MCF 10A (cell line): ENCODE measurements at regions of chr15 and their contacts with region 1.

Region 1: GRCh38 chr15:67048281-67049279 is 16.8 kb upstream of the SMAD3 start:
- DNase-seq: peak; percentile 88
- H3K4me3 Mint-ChIP-seq: no peak overlapping the region
- H3K27ac Mint-ChIP-seq: peak overlapping the region; percentile 94
- H3K4me1 Mint-ChIP-seq: peaks cover 45% of the 10 kb centered on the region
- H3K27me3 Mint-ChIP-seq: no peaks in the 10 kb centered on the region
- CTCF ChIP-seq: no peak

Region 2: DNA sequence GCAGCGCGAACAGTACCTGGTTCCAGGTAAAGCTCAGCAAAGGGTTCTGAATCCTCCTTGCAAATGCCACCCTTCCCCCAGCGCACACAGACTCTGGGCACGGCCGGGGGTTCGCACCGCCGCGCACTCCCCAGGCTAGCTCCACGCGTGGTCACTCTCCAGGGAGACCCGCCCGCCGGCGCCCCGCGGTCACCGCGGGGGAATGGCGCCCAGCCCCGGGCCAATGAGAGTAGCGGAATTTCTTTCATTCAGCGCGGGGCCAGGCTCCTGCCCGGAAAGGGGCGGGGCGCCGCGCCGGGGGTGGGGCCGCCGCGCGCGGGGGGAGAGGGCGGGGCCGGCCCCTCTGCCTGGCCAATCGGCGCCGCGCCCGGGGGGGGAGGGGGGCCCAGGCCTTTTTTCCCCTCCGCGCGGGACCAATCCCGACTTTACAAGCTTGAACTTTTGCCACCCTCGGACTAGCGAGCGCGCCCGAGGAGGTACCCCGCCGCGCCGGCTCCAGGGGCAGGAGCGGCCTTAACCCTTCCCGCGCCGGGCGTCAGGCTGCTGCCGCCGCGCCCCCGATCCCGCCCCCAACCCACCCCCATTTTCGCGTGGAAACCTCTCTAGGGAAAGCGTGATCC is 347.7 kb before region 1 on chr15:
- CTCF ChIA-PET with region 1: no interaction called
- POLR2A ChIA-PET with region 1: no interaction called
- intact Hi-C with region 1: no loop called
- DNase-seq: peak; percentile 95
- H3K4me3 Mint-ChIP-seq: peak overlapping the region; percentile 79
- H3K27ac Mint-ChIP-seq: no peak overlapping the region
- H3K4me1 Mint-ChIP-seq: peaks cover 12% of the 10 kb centered on the region
- H3K27me3 Mint-ChIP-seq: peaks cover 18% of the 10 kb centered on the region
- CTCF ChIP-seq: no peak

Region 3: GRCh38 chr15:66946578-66947164 is 101.9 kb before region 1 on chr15:
- CTCF ChIA-PET with region 1: interaction called, 6 read pairs
- POLR2A ChIA-PET with region 1: no interaction called
- intact Hi-C with region 1: loop called (anchors 5 kb)
- DNase-seq: peak; percentile 83
- H3K4me3 Mint-ChIP-seq: no peak overlapping the region
- H3K27ac Mint-ChIP-seq: no peak overlapping the region
- H3K4me1 Mint-ChIP-seq: peaks cover 7% of the 10 kb centered on the region
- H3K27me3 Mint-ChIP-seq: no peaks in the 10 kb centered on the region
- CTCF ChIP-seq: peak; percentile 94

Region 4: GRCh38 chr15:67120839-67121643 is 72.5 kb after region 1 on chr15:
- CTCF ChIA-PET with region 1: no interaction called
- POLR2A ChIA-PET with region 1: interaction called, 19 read pairs
- intact Hi-C with region 1: no loop called
- DNase-seq: peak; percentile 77
- H3K4me3 Mint-ChIP-seq: peak overlapping the region; percentile 55
- H3K27ac Mint-ChIP-seq: peak overlapping the region; percentile 97
- H3K4me1 Mint-ChIP-seq: peaks cover 66% of the 10 kb centered on the region
- H3K27me3 Mint-ChIP-seq: no peaks in the 10 kb centered on the region
- CTCF ChIP-seq: no peak

Region 5: GRCh38 chr15:67240235-67241131 is 191.9 kb after region 1 on chr15:
- CTCF ChIA-PET with region 1: no interaction called
- POLR2A ChIA-PET with region 1: interaction called, 4 read pairs
- intact Hi-C with region 1: loop called (anchors 5 kb)
- DNase-seq: peak; percentile 57
- H3K4me3 Mint-ChIP-seq: no peak overlapping the region
- H3K27ac Mint-ChIP-seq: peak overlapping the region; percentile 51
- H3K4me1 Mint-ChIP-seq: peaks cover 31% of the 10 kb centered on the region
- H3K27me3 Mint-ChIP-seq: no peaks in the 10 kb centered on the region
- CTCF ChIP-seq: peak; percentile 38

Region 6: DNA sequence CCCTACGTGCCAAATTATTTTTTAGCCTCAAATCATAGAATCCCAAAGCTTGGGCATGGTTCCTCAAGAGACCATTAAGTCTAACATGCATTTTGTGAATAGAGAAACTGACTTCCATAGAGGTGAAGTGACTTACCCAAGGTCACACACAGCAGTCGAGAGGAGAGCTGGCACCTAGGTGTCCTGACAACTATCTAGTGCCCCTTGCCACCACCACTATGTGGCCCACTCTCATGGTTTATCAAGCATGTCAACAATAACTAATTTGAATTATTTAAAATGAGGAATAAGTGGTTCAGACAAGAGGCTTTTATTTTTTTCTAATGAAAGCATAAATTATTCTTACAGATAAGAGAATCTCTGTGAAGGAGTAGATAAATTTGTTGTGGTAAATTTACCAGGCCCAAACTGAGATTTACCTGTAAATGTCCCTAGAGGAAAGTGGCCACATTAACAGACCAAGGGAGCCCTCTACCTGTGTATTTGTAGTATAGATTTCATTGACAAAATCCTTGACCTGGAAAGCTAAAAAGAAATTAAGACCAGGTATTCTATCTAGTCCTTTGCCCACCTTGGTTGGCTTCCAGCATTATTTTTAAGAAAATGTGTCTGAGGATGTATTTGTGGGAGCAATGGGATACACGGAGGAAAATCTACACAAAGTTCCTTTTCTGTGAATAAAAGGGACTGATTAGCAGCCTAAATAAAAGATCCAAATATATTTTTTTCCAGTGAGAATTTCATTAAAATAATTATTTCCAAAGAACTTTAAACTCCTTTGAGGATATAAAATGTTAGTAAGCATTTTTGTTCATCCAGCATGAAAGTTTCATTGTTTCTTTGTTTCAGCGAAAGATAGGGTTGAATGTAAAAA is 255.1 kb after region 1 on chr15:
- CTCF ChIA-PET with region 1: no interaction called
- POLR2A ChIA-PET with region 1: no interaction called
- intact Hi-C with region 1: loop called (anchors 2 kb)
- DNase-seq: peak; percentile 63
- H3K4me3 Mint-ChIP-seq: no peak overlapping the region
- H3K27ac Mint-ChIP-seq: no peak overlapping the region
- H3K4me1 Mint-ChIP-seq: no peaks in the 10 kb centered on the region
- H3K27me3 Mint-ChIP-seq: no peaks in the 10 kb centered on the region
- CTCF ChIP-seq: peak; percentile 66